CD4-positive, alpha-beta memory T cell (primary cell): ENCODE measurements at regions of chr15 and their contacts with region 1.

Region 1: GRCh38 chr15:94230956-94231722 is at the start of gene MCTP2:
- DNase-seq: peak; percentile 79 to 86 (median 81)
- H3K4me3 ChIP-seq: peak within 1 kb of the TSS; percentile 64 to 85
- H3K4me3 Mint-ChIP-seq: peak within 1 kb of the TSS; percentile 92 to 97 (median 95)
- H3K27ac ChIP-seq: peak within 1 kb of the TSS; percentile 71
- H3K27ac Mint-ChIP-seq: peak within 1 kb of the TSS; percentile 91 to 98 (median 97)
- H3K4me1 ChIP-seq: peaks cover 36% of the 10 kb centered on the region
- H3K4me1 Mint-ChIP-seq: peaks cover 30 to 62% (median 46%) of the 10 kb centered on the region in 4 donors
- H3K27me3 ChIP-seq: no peaks in the 10 kb centered on the region
- H3K27me3 Mint-ChIP-seq: no peaks in the 10 kb centered on the region
- total RNA-seq, gene MCTP2: 18.3 to 19.6 TPM

Region 2: GRCh38 chr15:94287794-94288246 is 56.7 kb after region 1 on chr15:
- CTCF ChIA-PET with region 1: interaction called, 3 read pairs
- POLR2A ChIA-PET with region 1: interaction called, 10 read pairs
- intact Hi-C with region 1: no loop called
- DNase-seq: peak; percentile 17 to 68 (median 26)
- H3K4me3 ChIP-seq: no peak overlapping the region
- H3K4me3 Mint-ChIP-seq: peak overlapping the region in 6 of 8 donors; percentile 15 to 75 (median 58)
- H3K27ac ChIP-seq: no peak overlapping the region
- H3K27ac Mint-ChIP-seq: peak overlapping the region in 3 of 7 donors; percentile 43 to 74 (median 63)
- H3K4me1 ChIP-seq: peaks cover 10% of the 10 kb centered on the region
- H3K4me1 Mint-ChIP-seq: peaks cover 9 to 40% (median 24%) of the 10 kb centered on the region in 4 donors
- H3K27me3 ChIP-seq: no peaks in the 10 kb centered on the region
- H3K27me3 Mint-ChIP-seq: no peaks in the 10 kb centered on the region

Region 3: GRCh38 chr15:94331731-94332130 is 100.6 kb after region 1 on chr15:
- CTCF ChIA-PET with region 1: no interaction called
- POLR2A ChIA-PET with region 1: no interaction called
- intact Hi-C with region 1: no loop called
- DNase-seq: no peak
- H3K4me3 ChIP-seq: no peak overlapping the region
- H3K4me3 Mint-ChIP-seq: no peak overlapping the region
- H3K27ac ChIP-seq: no peak overlapping the region
- H3K27ac Mint-ChIP-seq: no peak overlapping the region
- H3K4me1 ChIP-seq: no peaks in the 10 kb centered on the region
- H3K4me1 Mint-ChIP-seq: peaks cover 0 to 1% (median 0%) of the 10 kb centered on the region in 4 donors
- H3K27me3 ChIP-seq: no peaks in the 10 kb centered on the region
- H3K27me3 Mint-ChIP-seq: no peaks in the 10 kb centered on the region